ENCODE measurements at regions of chr2 and their contacts with region 1.

Region 1: GRCh38 chr2:199495149-199495548 is 37.4 kb upstream of the SATB2 start:
- DNase-seq: no peak
- ATAC-seq: no peak
- H3K4me3 ChIP-seq: no peak overlapping the region
- H3K27ac ChIP-seq: no peak overlapping the region
- H3K4me1 ChIP-seq: no peaks in the 10 kb centered on the region
- H3K27me3 ChIP-seq: peaks cover 0 to 27% (median 0%) of the 10 kb centered on the region in 7 donors
- CTCF ChIP-seq: no peak

Region 2: DNA sequence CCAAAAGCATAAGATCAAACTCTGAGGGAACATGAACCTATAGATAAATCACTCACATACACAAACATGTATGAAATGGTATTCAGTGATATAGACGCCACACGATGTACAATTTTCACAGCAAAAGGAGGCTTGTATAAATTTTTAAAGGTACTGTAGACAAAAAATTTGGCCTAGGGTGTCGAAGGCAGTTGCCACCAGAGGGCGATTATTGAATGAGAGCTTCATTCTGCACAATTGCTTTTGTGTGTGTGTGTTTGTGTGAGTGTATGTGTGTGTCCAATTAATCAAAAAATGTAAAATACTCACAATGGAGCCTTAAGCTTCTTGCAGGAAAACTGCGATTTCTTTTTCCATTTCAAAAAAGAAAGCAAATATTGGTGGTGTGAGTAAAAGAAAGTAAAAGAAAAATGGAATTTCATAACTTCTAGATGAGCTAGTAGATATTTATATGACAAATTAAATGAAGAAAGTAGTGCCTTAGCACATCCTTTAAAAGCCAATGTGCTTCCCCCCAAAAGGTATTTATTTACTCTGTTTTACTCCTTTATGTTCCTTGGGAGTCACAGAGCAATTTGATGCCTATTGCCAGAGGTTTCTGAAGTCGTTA is 837.5 kb before region 1 on chr2:
- intact Hi-C with region 1: loop called in 1 of 10 experiments (anchors 10 kb)
- DNase-seq: no peak
- ATAC-seq: no peak
- H3K4me3 ChIP-seq: no peak overlapping the region
- H3K27ac ChIP-seq: no peak overlapping the region
- H3K4me1 ChIP-seq: no peaks in the 10 kb centered on the region
- H3K27me3 ChIP-seq: no peaks in the 10 kb centered on the region
- CTCF ChIP-seq: peak in 5 of 9 donors; percentile 18 to 43 (median 30)

Measured in heart right ventricle (tissue), 16 donors.